ENCODE measurements at regions of chr14 and their contacts with region 1.

Region 1: DNA sequence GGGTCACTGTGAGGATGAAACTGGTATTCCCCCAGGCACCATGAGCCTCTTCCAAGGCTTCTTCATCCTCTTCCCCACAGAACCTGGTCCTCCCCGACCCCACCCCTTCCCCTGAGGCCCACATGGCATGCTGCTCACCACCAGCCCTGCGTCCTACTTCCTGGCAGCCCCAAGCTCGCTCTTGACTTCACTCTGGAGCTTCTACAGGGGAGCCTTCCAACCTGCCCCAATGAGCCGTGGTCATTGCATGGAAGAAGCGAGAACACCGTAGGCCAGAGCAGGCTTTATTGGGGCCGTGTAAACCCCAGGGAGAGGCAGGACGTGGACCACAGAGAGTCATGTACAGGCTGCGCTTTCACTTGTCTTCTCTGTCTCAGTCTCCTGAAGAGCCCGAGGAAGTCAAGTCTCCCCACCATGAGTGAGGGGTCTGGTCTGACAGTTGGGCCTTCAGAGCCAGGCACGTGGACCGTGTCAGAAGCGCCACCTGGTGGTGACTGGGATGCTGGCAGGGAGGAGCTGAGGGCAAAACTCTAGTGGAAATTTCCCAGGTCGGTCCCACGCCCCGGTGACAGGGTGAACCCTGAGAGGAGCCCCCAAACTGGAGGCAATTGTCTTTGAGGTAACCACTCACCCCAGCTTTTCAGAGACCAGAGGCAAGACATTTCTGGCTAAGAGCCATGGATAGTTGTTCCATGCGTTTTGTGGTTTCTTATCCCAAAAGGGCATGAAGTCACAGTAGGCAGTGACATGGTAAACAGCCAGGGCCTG is 17.5 kb downstream of the RPS6KL1 start:
- DNase-seq: peak; percentile 81
- ATAC-seq: peak; percentile 65
- H3K4me3 Mint-ChIP-seq: no peak overlapping the region
- H3K27ac Mint-ChIP-seq: peak overlapping the region; percentile 50
- H3K4me1 Mint-ChIP-seq: peaks cover 12% of the 10 kb centered on the region
- H3K27me3 Mint-ChIP-seq: no peaks in the 10 kb centered on the region

Region 2: DNA sequence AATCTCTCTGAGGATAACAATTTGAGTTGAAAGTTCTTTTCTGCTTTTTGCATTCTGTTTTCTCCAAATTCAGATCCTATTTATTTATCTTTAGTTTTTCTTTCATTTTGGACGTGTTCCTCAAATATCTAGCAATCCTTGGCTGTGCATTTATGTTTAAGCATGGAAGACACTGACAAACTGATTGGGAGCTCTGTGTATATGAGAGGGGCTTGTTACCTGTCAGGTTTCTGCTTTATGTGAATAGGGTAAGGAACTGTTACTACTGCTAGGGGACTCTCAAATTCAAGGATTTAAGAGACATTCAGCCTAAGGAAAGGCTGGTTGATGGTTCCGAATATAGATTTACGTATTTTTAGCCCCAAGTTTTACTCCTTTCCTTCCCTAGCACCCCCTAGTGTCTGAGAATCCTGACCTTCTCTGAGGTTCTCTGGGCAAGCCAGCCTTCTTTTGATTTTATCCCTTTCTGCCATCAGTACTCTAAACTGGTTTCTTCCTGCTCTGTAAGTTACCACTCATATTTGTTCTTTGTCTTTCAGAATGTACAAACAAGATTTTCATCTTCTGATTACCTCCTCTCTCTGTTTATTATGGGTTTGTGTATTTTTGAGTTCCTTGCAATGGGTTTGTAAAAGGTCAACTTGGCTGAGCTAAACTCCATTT is 111.9 kb before region 1 on chr14:
- CTCF ChIA-PET with region 1: no interaction called
- POLR2A ChIA-PET with region 1: no interaction called
- DNase-seq: peak; percentile 36
- ATAC-seq: peak; percentile 32
- H3K4me3 Mint-ChIP-seq: peak overlapping the region; percentile 71
- H3K27ac Mint-ChIP-seq: peak overlapping the region; percentile 77
- H3K4me1 Mint-ChIP-seq: peaks cover 36% of the 10 kb centered on the region
- H3K27me3 Mint-ChIP-seq: no peaks in the 10 kb centered on the region

Region 3: DNA sequence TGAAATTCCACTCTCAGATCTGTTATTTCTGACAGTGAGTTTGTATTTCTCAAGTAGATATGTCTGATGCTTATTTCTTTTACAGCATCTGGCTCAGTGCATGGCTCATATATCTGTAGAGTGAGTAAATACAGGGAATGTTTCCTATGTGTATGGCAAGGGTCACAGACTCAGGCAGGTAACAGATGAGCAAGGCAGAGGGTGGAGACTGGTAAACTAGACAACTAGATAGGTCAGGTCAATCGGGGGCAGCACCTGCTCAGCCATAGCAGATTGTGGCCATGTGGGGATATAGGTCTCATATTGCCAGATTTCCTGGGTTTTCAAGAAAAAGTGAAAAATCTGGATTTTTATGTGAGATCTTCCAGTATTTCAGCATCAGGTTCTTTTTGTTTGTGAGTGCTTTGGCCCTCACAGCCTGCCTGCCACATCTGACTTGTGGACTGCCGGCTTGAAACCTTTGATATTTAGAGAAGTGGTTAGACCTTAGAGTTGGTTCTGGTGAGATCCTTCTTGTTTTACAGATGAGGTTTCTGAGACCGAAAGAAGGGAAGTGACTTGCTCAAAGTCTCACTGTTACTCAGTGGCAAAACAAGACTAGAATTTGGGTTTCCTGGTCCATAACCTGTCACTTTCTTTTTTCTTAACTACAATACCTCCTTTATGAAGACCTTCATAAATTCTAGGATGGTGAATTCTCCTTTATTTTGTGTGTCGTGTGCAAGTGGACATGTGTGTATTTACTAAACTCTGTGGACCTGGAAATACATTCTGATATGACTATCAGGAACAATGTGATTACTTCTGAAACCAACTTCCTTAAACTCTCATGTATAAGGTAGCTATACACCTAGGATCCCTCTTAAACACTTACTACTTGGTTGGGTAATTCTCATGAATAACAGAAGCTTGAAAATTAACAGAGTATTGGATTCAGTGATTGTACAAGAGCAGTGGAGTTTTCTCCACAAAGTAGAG is 64.0 kb before region 1 on chr14:
- CTCF ChIA-PET with region 1: interaction called, 11 read pairs
- POLR2A ChIA-PET with region 1: no interaction called
- DNase-seq: peak; percentile 64
- ATAC-seq: peak; percentile 84
- H3K4me3 Mint-ChIP-seq: peak overlapping the region; percentile 32
- H3K27ac Mint-ChIP-seq: peak overlapping the region; percentile 85
- H3K4me1 Mint-ChIP-seq: peaks cover 60% of the 10 kb centered on the region
- H3K27me3 Mint-ChIP-seq: no peaks in the 10 kb centered on the region

Region 4: GRCh38 chr14:74867673-74868072 is 37.9 kb before region 1 on chr14:
- CTCF ChIA-PET with region 1: interaction called, 552 read pairs
- POLR2A ChIA-PET with region 1: interaction called, 4 read pairs
- DNase-seq: peak; percentile 86
- ATAC-seq: peak; percentile 97
- H3K4me3 Mint-ChIP-seq: peak overlapping the region; percentile 46
- H3K27ac Mint-ChIP-seq: peak overlapping the region; percentile 86
- H3K4me1 Mint-ChIP-seq: peaks cover 33% of the 10 kb centered on the region
- H3K27me3 Mint-ChIP-seq: no peaks in the 10 kb centered on the region

Region 5: GRCh38 chr14:74881431-74882361 is 23.9 kb before region 1 on chr14 and contains the start of gene DLST:
- CTCF ChIA-PET with region 1: interaction called, 119 read pairs
- POLR2A ChIA-PET with region 1: interaction called, 3 read pairs
- DNase-seq: peak; percentile 89
- ATAC-seq: peak; percentile 90
- H3K4me3 Mint-ChIP-seq: peak within 1 kb of the TSS; percentile 98
- H3K27ac Mint-ChIP-seq: peak within 1 kb of the TSS; percentile 98
- H3K4me1 Mint-ChIP-seq: peaks cover 59% of the 10 kb centered on the region
- H3K27me3 Mint-ChIP-seq: no peaks in the 10 kb centered on the region
- total RNA-seq, gene DLST: 106 to 108 TPM

Region 6: DNA sequence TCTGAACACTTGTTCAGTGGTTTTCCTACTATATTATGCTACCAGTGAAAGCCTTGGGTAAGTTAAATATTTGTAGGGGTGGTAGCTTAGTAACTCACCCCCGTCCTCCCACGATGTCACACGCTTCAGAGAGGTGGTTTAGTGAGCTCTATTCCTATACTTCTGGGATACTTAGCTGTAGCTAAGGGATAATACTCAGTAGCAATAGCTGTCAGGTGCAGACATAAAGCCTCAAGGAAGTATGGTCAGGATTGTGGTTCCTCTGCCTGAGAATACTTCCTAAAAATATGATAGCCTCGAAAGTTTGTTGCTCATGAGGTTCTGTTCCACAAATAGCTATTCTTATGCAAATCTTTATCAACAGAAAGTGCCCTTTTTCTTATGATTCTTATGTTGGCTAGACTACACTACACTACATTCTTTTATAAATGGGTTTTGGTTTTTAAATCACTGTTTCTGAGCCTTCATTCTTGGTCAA is 11.9 kb before region 1 on chr14:
- CTCF ChIA-PET with region 1: interaction called, 72 read pairs
- POLR2A ChIA-PET with region 1: interaction called, 5 read pairs
- DNase-seq: no peak
- ATAC-seq: no peak
- H3K4me3 Mint-ChIP-seq: no peak overlapping the region
- H3K27ac Mint-ChIP-seq: no peak overlapping the region
- H3K4me1 Mint-ChIP-seq: peaks cover 17% of the 10 kb centered on the region
- H3K27me3 Mint-ChIP-seq: no peaks in the 10 kb centered on the region

Region 7: GRCh38 chr14:74917646-74918081 is 12.1 kb after region 1 on chr14:
- CTCF ChIA-PET with region 1: interaction called, 12 read pairs
- POLR2A ChIA-PET with region 1: interaction called, 4 read pairs
- DNase-seq: no peak
- ATAC-seq: no peak
- H3K4me3 Mint-ChIP-seq: no peak overlapping the region
- H3K27ac Mint-ChIP-seq: no peak overlapping the region
- H3K4me1 Mint-ChIP-seq: peaks cover 3% of the 10 kb centered on the region
- H3K27me3 Mint-ChIP-seq: no peaks in the 10 kb centered on the region

Region 8: DNA sequence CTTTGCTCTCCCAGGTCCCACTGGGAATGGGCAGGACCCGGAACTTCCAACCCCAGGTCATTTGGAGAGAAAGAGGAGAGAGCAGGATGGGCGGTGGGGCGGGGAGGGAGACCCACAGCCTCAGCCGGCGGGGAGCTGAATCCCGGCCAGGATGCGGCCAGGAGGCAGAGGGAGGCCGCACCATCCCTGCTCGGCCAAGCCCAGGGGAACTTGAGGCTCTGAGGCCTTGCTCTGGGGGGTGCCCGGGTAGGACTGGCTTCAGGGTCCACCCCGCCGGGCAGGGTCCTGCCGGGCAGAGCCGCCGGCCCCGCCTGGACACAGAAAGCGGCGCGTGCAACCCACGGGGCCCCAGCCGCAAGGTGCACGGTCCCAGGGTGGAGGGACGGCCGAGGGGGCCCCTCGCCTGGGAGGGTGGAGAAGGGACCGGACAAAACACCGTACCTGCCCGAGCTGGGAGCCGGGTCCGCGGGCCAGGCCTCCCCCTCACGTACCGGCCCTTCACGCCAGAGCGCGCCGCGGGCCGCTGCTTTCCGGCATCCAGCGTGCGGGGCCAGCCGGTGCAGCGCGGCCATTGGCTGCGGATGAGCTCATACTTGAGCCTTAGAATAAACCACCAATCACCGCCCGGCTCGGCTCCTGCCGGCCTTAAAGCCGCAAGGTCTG is 17.3 kb after region 1 on chr14 and contains the start of gene RPS6KL1:
- CTCF ChIA-PET with region 1: interaction called, 12 read pairs
- POLR2A ChIA-PET with region 1: no interaction called
- DNase-seq: peak; percentile 85
- ATAC-seq: peak; percentile 99
- H3K4me3 Mint-ChIP-seq: peak within 1 kb of the TSS; percentile 58
- H3K27ac Mint-ChIP-seq: peak within 1 kb of the TSS; percentile 27
- H3K4me1 Mint-ChIP-seq: peaks cover 10% of the 10 kb centered on the region
- H3K27me3 Mint-ChIP-seq: peaks cover 19% of the 10 kb centered on the region
- total RNA-seq, gene RPS6KL1: 4.3 to 5.2 TPM